Left ventricle myocardium superior (tissue), 1 donor: ENCODE measurements at regions of chr3 and their contacts with region 1.

Region 1: GRCh38 chr3:120795017-120795648 is 52.6 kb downstream of the GTF2E1 start:
- DNase-seq: peak; percentile 88
- ATAC-seq: peak; percentile 89

Region 2: DNA sequence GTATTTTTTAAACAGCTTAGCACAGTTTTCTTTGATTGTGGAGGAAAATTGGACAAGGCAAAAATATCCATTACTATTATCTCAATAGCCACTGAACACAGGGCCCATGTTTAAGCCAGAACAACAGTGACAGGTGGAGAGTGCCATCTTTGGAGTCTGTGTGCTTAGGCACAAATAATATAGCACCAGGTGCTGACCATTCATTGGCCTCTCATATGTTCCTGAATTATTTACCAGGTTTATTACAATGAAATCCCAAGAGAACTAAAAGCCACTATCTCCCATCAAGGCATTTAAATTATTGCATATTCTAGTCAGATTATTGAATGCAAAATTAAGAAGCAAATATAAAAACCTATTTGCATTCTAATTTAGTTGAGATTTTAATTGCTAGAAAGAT is 549.7 kb before region 1 on chr3:
- intact Hi-C with region 1: loop called (anchors 10 kb)
- DNase-seq: no peak
- ATAC-seq: no peak

Region 3: DNA sequence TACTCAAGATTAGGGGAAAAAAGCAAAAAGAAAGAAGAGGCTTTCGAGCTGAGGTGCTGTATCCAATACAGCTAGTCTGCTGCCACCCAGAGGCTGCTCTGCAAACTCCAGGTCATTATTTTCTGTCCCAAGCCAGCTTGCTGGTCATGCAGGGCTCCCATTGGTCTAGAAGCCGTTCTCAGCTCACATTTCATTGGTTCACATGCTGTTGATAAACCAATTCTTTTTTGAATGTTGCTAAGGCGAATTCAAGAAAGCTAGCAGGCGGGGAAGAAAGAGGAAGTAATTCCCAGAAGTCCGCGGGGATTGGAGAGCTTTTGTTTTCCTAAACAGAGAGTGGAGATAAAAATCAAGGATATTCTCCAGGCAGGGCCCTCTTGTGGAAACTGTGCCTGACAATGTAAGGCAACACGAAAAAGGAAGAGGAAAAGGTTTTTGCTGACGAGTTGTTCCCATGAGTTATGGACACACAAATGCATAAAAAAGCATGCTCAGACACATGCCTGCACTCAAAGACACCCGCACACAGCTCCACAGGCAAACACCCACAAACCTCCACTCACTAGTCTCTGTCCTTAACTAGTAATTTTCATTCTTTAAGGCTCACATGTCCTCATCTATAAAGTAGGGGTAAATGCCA is 377.7 kb before region 1 on chr3:
- intact Hi-C with region 1: loop called (anchors 10 kb)
- DNase-seq: peak; percentile 90
- ATAC-seq: peak; percentile 51

Region 4: DNA sequence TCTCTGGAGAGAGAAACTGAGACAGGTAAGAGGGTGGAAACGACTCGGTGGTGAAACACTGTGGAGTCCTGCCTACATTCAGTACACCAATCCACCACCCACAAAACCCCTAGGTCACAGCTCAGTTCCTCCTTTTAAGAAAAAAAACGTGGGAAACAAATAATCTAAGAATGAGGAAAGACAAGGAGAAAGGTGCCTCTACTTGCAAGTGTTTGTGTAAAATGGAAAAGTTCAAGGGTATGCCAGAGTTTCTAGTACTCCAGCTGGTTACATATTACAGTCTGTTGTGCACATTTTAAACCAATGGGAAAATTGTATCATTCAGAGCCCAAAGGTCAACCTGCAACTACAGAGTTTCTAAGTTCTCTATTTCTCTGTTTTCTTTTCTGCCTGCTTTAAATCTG is 145.3 kb before region 1 on chr3:
- intact Hi-C with region 1: no loop called
- DNase-seq: no peak
- ATAC-seq: no peak